ENCODE measurements at regions of chr11 and their contacts with region 1.

Region 1: GRCh38 chr11:115238791-115239190 is 265.4 kb downstream of the CADM1 start:
- DNase-seq: no peak
- H3K4me3 ChIP-seq: no peak overlapping the region
- H3K27ac ChIP-seq: no peak overlapping the region
- H3K4me1 ChIP-seq: no peaks in the 10 kb centered on the region
- H3K27me3 ChIP-seq: no peaks in the 10 kb centered on the region
- CTCF ChIP-seq: peak; percentile 36 to 53 (median 41); a peak in 3 of 4 replicates
- EP300 ChIP-seq: no peak
- POLR2A ChIP-seq: no peak
- RAD21 ChIP-seq: peak; percentile 59 to 70

Region 2: GRCh38 chr11:115251126-115251525 is 12.3 kb after region 1 on chr11:
- CTCF ChIA-PET with region 1: interaction called, 24 read pairs
- POLR2A ChIA-PET with region 1: no interaction called
- DNase-seq: no peak
- H3K4me3 ChIP-seq: no peak overlapping the region
- H3K27ac ChIP-seq: no peak overlapping the region
- H3K4me1 ChIP-seq: peaks cover 0 to 3% (median under 1%) of the 10 kb centered on the region in 4 experiments; a peak in 3 of 7 replicates
- H3K27me3 ChIP-seq: no peaks in the 10 kb centered on the region
- CTCF ChIP-seq: no peak
- EP300 ChIP-seq: no peak
- POLR2A ChIP-seq: no peak
- RAD21 ChIP-seq: no peak

Measured in H1 (cell line).